Aorta (tissue), 5 donors: ENCODE measurements at regions of chr16 and their contacts with region 1.

Region 1: DNA sequence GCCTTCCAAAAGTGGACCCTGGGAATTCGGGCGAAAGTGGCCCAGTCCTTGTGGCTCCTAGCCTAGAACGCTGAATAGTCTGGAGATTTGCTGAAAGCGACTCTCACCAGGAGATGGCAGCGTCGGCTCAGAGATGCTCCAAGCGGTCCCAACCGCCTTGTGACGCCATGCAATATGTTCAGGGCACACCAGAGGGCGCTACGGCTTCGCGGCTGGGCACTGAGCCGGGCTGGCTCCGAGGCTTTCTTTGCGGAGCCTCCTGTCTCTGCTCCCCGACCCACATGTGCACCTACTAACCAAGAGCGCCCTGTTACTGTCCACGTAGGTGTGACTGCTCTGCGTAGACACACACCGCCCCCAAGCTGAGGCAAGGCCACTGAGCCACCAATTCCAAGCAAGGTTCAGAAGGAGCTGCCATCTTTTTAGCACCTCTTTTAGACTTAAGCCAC is 36.9 kb downstream of the SYCE1L start:
- DNase-seq: peak; percentile 89 to 96
- ATAC-seq: peak; percentile 99
- H3K4me3 ChIP-seq: no peak overlapping the region
- H3K27ac ChIP-seq: no peak overlapping the region
- H3K4me1 ChIP-seq: no peaks in the 10 kb centered on the region
- H3K27me3 ChIP-seq: no peaks in the 10 kb centered on the region

Region 2: DNA sequence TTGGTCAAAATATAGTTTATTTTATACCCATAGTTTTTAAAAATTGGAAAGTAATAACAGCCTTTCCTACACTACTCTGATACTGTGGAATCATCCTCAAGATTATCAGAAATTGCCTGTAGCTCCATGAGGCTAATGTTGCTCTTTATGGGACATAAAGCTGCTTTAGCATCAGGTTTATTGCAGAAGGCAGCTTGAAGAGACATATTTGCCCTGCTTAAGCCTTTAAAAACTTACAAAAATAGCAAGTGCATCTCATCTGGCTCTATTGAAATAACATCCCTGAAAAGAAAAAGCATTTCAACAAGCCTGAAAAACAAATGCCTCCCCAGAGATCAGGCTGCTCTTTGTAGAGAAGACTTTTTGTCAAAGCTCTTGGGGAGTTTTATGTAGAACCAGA is 188.0 kb before region 1 on chr16:
- intact Hi-C with region 1: no loop called
- DNase-seq: no peak
- ATAC-seq: no peak
- H3K4me3 ChIP-seq: no peak overlapping the region
- H3K27ac ChIP-seq: no peak overlapping the region
- H3K4me1 ChIP-seq: no peaks in the 10 kb centered on the region
- H3K27me3 ChIP-seq: no peaks in the 10 kb centered on the region

Region 3: DNA sequence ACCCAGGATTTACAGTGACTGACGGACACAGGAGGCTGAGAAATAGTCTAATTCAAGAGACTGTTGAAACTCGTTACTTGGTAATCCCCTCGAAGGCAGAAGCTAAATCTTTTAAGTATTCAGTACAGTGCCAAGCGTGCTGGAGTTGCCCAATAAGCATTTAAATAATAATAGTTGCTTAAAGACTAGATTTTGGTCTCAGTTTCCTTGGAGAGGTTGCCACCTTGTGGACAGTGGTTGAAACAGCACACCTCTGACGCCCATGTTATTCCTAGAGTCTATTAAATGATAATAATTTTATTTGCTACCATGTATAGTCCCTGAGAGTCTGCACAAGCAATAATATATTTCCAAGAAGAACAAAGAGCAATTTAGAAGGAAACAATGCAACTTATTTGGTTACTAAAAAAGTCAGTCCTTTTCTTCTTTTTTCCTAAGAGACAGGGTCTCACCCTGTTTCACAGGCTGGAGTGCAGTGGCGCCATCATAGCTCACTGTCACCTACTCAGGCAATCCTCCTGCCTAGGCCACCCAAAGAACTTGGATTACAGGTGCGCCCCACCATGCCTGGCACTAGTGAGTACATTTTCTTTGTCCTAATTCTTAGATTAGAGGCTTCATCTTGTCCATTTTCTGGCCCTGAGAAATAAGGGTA is 348.2 kb after region 1 on chr16:
- intact Hi-C with region 1: loop called (anchors 1 to 2 kb)
- DNase-seq: no peak
- ATAC-seq: no peak
- H3K4me3 ChIP-seq: no peak overlapping the region
- H3K27ac ChIP-seq: no peak overlapping the region
- H3K4me1 ChIP-seq: no peaks in the 10 kb centered on the region
- H3K27me3 ChIP-seq: no peaks in the 10 kb centered on the region

Region 4: DNA sequence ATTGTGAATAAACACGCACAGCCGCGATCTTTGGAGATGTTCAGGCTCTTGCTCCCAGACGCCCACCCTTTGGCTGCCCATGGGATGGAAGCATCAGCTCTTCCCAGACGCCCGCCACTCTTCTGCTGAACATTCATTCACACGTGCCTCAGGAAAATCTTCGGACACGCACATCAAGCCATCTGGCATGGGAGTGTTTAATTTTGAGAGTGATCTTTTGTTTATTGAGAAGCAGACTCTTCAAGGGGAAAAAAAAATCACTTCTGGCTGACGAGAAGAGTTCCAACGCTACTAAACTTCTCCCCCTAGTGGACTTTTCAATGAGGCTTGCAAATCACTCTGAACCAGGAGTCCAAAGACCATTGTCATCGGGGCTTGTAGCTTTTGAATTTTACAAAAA is 424.2 kb after region 1 on chr16:
- intact Hi-C with region 1: loop called (anchors 5 kb)
- DNase-seq: no peak
- ATAC-seq: no peak
- H3K4me3 ChIP-seq: no peak overlapping the region
- H3K27ac ChIP-seq: no peak overlapping the region
- H3K4me1 ChIP-seq: no peaks in the 10 kb centered on the region
- H3K27me3 ChIP-seq: no peaks in the 10 kb centered on the region

Region 5: DNA sequence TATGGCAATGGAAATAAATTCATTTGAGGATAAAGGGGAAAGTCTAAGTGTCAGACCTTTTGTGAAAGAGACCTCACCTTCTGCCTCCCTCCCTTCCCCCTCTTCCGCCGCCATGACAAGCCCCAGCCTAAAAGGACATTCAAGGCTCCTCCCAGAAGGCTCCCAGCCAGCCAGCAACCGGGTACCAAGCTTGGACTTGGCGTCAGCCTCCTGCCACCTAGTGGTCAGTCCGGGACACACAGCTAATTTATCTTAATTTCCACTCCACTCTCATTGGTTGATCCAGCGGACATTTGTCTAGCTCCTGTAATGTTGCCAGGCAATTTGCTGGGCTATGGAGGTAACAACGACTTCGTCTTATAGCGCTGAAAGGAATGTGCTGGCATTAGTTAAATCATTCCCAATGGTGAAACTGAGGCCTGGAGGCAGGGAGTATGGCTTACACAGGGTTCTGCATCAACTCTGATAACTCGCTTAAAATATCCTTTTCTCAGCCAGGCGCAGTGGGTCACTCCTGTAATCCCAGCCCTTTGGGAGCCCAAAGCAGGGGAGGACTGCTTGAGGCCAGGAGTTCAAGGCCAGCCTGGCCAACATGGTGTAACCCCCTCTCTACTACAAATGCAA is 766.9 kb after region 1 on chr16:
- intact Hi-C with region 1: loop called in 1 of 2 experiments (anchors 10 kb)
- DNase-seq: peak; percentile 91 to 95
- ATAC-seq: peak; percentile 92
- H3K4me3 ChIP-seq: no peak overlapping the region
- H3K27ac ChIP-seq: no peak overlapping the region
- H3K4me1 ChIP-seq: no peaks in the 10 kb centered on the region
- H3K27me3 ChIP-seq: no peaks in the 10 kb centered on the region